ENCODE measurements at regions of chr1 and their contacts with region 1.

Region 1: DNA sequence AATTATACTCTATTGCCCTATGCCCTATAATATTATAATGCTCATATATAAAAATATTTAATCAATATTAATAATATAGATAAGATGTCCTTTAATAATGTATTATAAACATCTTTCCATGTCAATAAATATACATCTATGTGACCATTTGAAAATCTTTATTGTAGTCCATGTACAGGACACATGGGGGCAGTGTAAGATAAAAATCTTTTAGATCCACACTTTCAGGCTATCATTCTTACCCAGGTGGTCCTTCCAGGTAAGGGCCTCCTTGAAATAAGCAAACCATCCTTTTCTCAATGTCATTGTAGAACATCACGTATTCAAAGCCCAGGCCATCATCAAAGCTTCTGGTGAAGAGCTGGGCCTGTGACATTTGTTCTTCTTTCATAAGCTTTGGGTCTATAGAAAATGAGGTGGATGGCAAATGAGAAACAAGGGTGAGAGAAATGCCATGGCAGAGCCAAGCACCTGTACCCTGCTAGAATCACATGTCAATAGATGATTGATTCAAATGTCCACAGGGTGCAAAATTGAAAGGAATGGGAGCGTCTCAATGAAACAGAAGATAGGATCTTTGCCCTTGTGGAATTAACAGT is 20.2 kb downstream of the THEM4 start:
- DNase-seq: no peak
- ATAC-seq: peak; percentile 57
- H3K4me3 Mint-ChIP-seq: no peak overlapping the region
- H3K27ac Mint-ChIP-seq: no peak overlapping the region
- H3K4me1 Mint-ChIP-seq: peaks cover 17% of the 10 kb centered on the region
- H3K27me3 Mint-ChIP-seq: no peaks in the 10 kb centered on the region

Region 2: DNA sequence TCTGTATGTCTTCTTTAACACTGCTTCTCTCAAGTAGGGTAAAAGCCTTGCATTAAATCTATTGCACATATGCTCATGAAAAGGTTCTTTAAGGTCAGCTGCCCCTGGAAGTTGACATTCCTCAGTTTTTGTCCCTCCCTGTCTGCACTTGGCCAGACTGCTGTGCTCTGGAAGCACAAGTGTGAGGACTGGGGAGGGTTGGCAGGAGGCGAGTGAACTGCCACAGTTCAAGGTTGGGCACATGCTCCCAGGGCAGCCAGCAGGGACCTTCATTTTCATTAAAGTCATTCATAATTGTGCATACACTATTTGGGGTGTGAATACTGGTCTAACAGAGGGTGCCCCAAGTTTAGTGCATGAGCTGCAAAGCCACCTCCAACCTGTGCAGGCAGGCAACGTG is 24.7 kb before region 1 on chr1:
- CTCF ChIA-PET with region 1: no interaction called
- POLR2A ChIA-PET with region 1: no interaction called
- DNase-seq: no peak
- ATAC-seq: no peak
- H3K4me3 Mint-ChIP-seq: no peak overlapping the region
- H3K27ac Mint-ChIP-seq: no peak overlapping the region
- H3K4me1 Mint-ChIP-seq: no peaks in the 10 kb centered on the region
- H3K27me3 Mint-ChIP-seq: peaks cover 20% of the 10 kb centered on the region

Region 3: DNA sequence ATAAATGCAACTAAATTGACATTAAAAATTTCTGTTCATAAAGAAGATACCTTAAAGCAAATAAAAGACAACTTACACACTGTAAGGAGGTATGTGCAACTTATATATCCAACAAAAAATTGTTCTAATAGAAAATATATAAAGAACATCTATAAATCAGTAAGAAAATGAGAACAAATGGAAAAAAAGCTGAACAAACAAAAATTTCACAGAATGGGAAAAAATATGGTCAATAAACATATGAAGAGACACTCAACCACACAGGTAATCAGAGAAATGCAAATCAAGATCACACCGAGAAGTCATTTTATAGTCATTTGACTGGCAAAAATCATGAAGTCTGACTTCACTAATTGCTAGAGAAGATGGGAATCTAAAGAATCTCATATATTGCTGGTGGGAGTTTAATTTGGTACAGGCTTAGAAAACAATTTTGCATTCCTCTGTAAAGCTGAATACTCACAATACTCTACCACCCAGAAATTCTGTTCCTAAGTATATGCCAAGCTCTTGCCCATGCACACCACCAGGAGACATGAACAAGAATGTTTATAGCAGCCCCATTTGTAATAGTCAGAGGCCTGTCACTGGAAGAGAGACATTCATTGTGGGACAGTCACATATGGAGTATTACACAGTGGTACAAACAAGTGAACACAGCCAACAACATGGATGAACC is 13.5 kb before region 1 on chr1:
- CTCF ChIA-PET with region 1: interaction called, 10 read pairs
- POLR2A ChIA-PET with region 1: interaction called, 4 read pairs
- DNase-seq: no peak
- ATAC-seq: no peak
- H3K4me3 Mint-ChIP-seq: no peak overlapping the region
- H3K27ac Mint-ChIP-seq: no peak overlapping the region
- H3K4me1 Mint-ChIP-seq: peaks cover 11% of the 10 kb centered on the region
- H3K27me3 Mint-ChIP-seq: no peaks in the 10 kb centered on the region

Region 4: GRCh38 chr1:151909150-151910149 is 20.4 kb after region 1 on chr1 and contains the start of gene THEM4:
- CTCF ChIA-PET with region 1: interaction called, 12 read pairs
- POLR2A ChIA-PET with region 1: interaction called, 3 read pairs
- DNase-seq: peak; percentile 96
- ATAC-seq: peak; percentile 94
- H3K4me3 Mint-ChIP-seq: peak within 1 kb of the TSS; percentile 94
- H3K27ac Mint-ChIP-seq: peak within 1 kb of the TSS; percentile 87
- H3K4me1 Mint-ChIP-seq: peaks cover 45% of the 10 kb centered on the region
- H3K27me3 Mint-ChIP-seq: peaks cover 2% of the 10 kb centered on the region
- total RNA-seq, gene THEM4: 29.8 to 31.7 TPM

Region 5: GRCh38 chr1:151992345-151993086 is 103.4 kb after region 1 on chr1:
- CTCF ChIA-PET with region 1: interaction called, 10 read pairs
- POLR2A ChIA-PET with region 1: no interaction called
- DNase-seq: peak; percentile 51
- ATAC-seq: peak; percentile 4
- H3K4me3 Mint-ChIP-seq: peak overlapping the region; percentile 99
- H3K27ac Mint-ChIP-seq: peak overlapping the region; percentile 97
- H3K4me1 Mint-ChIP-seq: peaks cover 62% of the 10 kb centered on the region
- H3K27me3 Mint-ChIP-seq: no peaks in the 10 kb centered on the region

Region 6: GRCh38 chr1:152189657-152190442 is 300.8 kb after region 1 on chr1:
- CTCF ChIA-PET with region 1: no interaction called
- POLR2A ChIA-PET with region 1: no interaction called
- DNase-seq: peak; percentile 77
- ATAC-seq: peak; percentile 57
- H3K4me3 Mint-ChIP-seq: peak overlapping the region; percentile 66
- H3K27ac Mint-ChIP-seq: no peak overlapping the region
- H3K4me1 Mint-ChIP-seq: peaks cover 6% of the 10 kb centered on the region
- H3K27me3 Mint-ChIP-seq: peaks cover 12% of the 10 kb centered on the region

Measured in activated CD8-positive, alpha-beta T cell treated with anti-CD3 and anti-CD28 coated beads, Interleukin-2, amount 10 ng/mL, durations not matched to agents 7 days and 5 days (primary cell).